ENCODE measurements at regions of chr16 and their contacts with region 1.

Region 1: GRCh38 chr16:4402439-4403132 is 13.8 kb downstream of the CORO7 start:
- DNase-seq: peak; percentile 77
- H3K4me3 ChIP-seq: no peak overlapping the region
- H3K27ac ChIP-seq: no peak overlapping the region
- H3K4me1 ChIP-seq: no peaks in the 10 kb centered on the region
- CTCF ChIP-seq: peak; percentile 87

Region 2: DNA sequence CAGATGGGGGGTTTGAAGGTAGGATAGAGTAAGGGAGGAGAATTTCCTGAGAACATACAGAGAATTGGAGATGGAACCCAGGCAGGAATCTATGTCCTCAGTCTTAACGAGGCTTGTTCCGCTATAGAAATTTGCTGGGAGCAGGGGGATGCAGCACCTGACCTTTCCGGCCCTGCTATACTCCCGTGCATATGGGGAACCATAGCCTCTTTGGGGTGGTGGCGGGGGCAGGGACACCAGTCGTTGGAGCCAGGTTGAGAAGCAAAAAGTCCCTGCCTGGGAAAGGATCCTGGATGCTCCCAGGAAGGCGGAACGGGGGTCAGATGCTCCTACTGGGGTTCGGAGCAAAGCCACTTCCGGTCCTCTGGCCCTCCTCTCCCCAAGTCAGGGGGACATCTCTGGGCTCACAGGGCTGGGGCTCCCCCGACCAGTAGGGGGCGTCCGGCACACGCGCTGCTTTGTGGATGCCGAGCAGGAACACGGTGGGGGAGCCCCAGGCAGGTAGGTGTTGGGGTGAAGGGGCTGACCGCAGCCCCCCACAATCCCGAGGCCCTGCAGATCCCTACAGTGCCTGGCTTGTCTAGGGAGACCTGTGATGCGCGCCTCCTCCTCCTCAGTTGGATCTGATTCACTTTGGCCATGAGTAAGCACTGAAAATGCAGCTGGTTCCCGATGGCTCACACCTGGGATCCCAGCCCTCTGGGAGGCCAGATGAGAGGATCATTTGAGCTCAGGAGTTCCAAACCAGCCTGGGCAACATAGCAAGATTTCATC is 114.3 kb before region 1 on chr16:
- CTCF ChIA-PET with region 1: no interaction called
- POLR2A ChIA-PET with region 1: interaction called, 3 read pairs
- intact Hi-C with region 1: loop called (anchors 5 kb)
- DNase-seq: peak; percentile 79
- H3K4me3 ChIP-seq: no peak overlapping the region
- H3K27ac ChIP-seq: no peak overlapping the region
- H3K4me1 ChIP-seq: peaks cover 5% of the 10 kb centered on the region
- CTCF ChIP-seq: peak; percentile 99

Region 3: DNA sequence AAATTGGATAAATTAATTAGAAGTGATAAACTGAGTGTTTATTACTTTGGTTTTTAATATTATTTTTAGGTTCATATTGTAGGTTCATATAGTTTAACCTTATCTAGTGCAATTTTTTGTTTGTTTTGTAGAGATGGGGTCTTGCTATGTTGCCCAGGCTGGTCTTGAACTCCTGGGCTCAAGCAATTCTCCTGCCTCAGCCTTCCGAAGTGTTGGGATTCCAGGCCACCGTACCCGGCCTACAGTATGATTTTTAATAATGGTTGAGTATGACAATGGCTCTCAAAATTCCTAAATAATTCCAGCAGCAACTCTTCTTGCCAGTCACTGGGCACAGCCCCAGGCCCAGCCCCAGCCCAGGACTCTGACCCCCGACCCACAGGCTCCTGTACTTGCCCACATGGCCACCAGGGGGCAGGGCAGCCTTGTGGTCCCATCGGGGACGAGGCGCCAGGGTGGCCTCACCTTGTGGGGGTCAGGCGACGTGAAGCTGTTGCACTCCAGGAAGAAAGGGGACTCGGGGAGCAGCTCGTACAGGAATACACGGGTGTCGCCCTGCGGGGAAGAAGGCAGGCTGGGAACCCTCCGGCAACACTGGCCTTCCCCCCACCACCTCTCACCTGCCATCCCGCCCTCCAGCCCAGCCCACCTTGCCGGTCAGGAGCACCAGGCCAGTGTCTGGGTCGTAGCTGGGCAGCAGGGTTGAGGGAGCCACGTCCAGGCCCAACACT is 43.6 kb before region 1 on chr16:
- CTCF ChIA-PET with region 1: interaction called, 3 read pairs
- POLR2A ChIA-PET with region 1: no interaction called
- intact Hi-C with region 1: loop called (anchors 1 kb)
- DNase-seq: peak; percentile 65
- H3K4me3 ChIP-seq: no peak overlapping the region
- H3K27ac ChIP-seq: no peak overlapping the region
- H3K4me1 ChIP-seq: peaks cover 12% of the 10 kb centered on the region
- CTCF ChIP-seq: peak; percentile 89